GM12878 (cell line): ENCODE measurements at regions of chr13 and their contacts with region 1.

Region 1: GRCh38 chr13:51764184-51765141 is 39.5 kb downstream of the DHRS12 start:
- DNase-seq: peak; percentile 65
- ATAC-seq: peak; percentile 90
- H3K4me3 ChIP-seq: peak overlapping the region; percentile 49
- H3K27ac ChIP-seq: peak overlapping the region; percentile 87
- H3K4me1 ChIP-seq: peaks cover 21% of the 10 kb centered on the region
- H3K27me3 ChIP-seq: no peaks in the 10 kb centered on the region
- CTCF ChIP-seq: 0 out of 6 replicates have a peak, but pooled peaks of 1 of the 3 experiments have one; percentile 7
- EP300 ChIP-seq: no peak
- POLR2A ChIP-seq: peak; percentile 81
- RAD21 ChIP-seq: no peak

Region 2: GRCh38 chr13:51590971-51591627 is 173.4 kb before region 1 on chr13:
- CTCF ChIA-PET with region 1: interaction called, 9 read pairs
- POLR2A ChIA-PET with region 1: interaction called, 4 read pairs
- RAD21 ChIA-PET with region 1: interaction called, 29 read pairs
- SMC1A ChIA-PET with region 1: interaction called, 11 read pairs
- in situ Hi-C with region 1: no loop called
- intact Hi-C with region 1: no loop called
- DNase-seq: no peak
- ATAC-seq: peak; percentile 27
- H3K4me3 ChIP-seq: no peak overlapping the region; the same call in 1 of the 2 replicates
- H3K27ac ChIP-seq: peak overlapping the region; percentile 18; the same call in 1 of the 2 replicates
- H3K4me1 ChIP-seq: peaks cover 3% of the 10 kb centered on the region; the same call in 1 of the 2 replicates
- H3K27me3 ChIP-seq: no peaks in the 10 kb centered on the region
- CTCF ChIP-seq: no peak
- EP300 ChIP-seq: no peak
- POLR2A ChIP-seq: no peak
- RAD21 ChIP-seq: 0 out of 2 replicates have a peak, but pooled peaks have one; percentile 13

Region 3: DNA sequence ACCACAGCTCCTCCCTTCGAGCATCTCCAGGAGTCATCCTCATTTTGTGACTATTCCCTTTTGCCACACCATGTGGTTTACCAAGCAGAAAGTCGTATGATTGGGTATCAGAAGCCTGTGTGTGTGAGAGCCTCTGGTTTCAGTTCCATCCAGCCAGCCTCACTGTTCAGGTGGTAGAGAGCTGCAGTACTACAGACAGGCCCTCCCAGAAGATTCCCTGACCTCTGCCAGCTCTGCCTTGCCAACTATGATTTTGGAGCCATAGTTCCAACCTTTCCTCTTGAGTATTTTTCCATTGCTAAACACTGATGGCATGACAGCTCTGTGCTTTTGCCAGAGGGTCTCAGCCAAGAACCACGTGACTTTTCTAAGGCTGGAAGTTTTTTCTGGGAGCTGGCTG is 43.0 kb before region 1 on chr13:
- CTCF ChIA-PET with region 1: interaction called, 3 read pairs
- POLR2A ChIA-PET with region 1: interaction called, 7 read pairs
- RAD21 ChIA-PET with region 1: interaction called, 4 read pairs
- SMC1A ChIA-PET with region 1: interaction called, 10 read pairs
- in situ Hi-C with region 1: no loop called
- intact Hi-C with region 1: no loop called
- DNase-seq: peak; percentile 53
- ATAC-seq: peak; percentile 95
- H3K4me3 ChIP-seq: no peak overlapping the region
- H3K27ac ChIP-seq: peak overlapping the region; percentile 72
- H3K4me1 ChIP-seq: peaks cover 15% of the 10 kb centered on the region
- H3K27me3 ChIP-seq: no peaks in the 10 kb centered on the region
- CTCF ChIP-seq: no peak
- EP300 ChIP-seq: no peak
- POLR2A ChIP-seq: no peak
- RAD21 ChIP-seq: no peak

Region 4: GRCh38 chr13:51781246-51782022 is 17.0 kb after region 1 on chr13:
- CTCF ChIA-PET with region 1: interaction called, 12 read pairs
- POLR2A ChIA-PET with region 1: interaction called, 3 read pairs
- RAD21 ChIA-PET with region 1: interaction called, 6 read pairs
- SMC1A ChIA-PET with region 1: interaction called, 6 read pairs
- in situ Hi-C with region 1: no loop called
- intact Hi-C with region 1: no loop called
- DNase-seq: no peak
- ATAC-seq: peak; percentile 86
- H3K4me3 ChIP-seq: no peak overlapping the region
- H3K27ac ChIP-seq: no peak overlapping the region
- H3K4me1 ChIP-seq: peaks cover 5% of the 10 kb centered on the region; the same call in 1 of the 2 replicates
- H3K27me3 ChIP-seq: no peaks in the 10 kb centered on the region
- CTCF ChIP-seq: peak; percentile 38 to 61 (median 57); a peak in 4 of 6 replicates
- EP300 ChIP-seq: no peak
- POLR2A ChIP-seq: no peak
- RAD21 ChIP-seq: peak; percentile 66

Region 5: DNA sequence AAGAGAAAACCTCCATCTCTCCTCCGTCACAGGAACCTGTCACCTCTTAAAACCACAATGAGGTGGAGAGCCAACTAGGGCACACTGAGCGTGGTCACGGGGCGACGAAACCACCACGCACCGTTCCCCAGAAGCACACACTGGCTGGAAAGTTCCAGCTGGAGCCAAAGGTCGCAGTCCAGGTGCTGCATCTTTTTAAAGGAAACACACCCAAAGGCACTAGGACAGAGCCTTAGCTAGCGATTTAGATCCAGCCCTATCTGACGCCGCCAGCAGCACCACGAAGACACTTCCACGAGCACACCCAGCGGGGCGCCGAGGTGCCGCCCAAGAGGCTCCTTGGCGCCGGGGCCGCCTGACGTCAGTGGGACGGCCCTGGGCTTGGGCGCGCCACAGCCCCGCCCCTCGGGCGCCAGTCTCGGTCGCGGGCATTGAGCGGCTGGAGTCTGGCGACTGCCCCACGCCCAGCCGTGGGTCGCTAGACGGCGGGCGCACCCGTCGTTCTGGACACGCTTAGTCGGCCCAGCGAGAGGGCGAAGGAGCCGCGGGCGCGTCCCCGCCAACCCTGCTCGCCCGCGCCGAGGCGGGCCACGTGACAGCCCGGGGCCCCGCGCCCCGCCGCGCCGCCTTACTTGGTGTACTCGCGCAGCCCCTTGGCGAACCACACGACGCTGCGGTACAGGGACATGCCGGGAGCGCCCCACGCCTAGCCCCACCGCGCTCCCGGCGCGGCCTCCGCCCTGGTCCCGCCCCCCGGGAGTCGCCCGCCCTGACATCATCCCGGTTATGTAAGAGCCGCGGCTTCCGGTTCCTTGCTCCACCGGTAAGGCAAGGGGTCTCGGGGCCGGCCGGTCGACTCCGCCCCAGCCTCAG is 39.2 kb after region 1 on chr13 and contains the start of gene DHRS12:
- CTCF ChIA-PET with region 1: interaction called, 13 read pairs
- POLR2A ChIA-PET with region 1: interaction called, 4 read pairs
- RAD21 ChIA-PET with region 1: interaction called, 7 read pairs
- SMC1A ChIA-PET with region 1: interaction called, 24 read pairs
- in situ Hi-C with region 1: no loop called
- intact Hi-C with region 1: no loop called
- DNase-seq: peak; percentile 58
- ATAC-seq: peak; percentile 86
- H3K4me3 ChIP-seq: peak within 1 kb of the TSS; percentile 82
- H3K27ac ChIP-seq: peak within 1 kb of the TSS; percentile 91
- H3K4me1 ChIP-seq: peaks cover 17% of the 10 kb centered on the region
- H3K27me3 ChIP-seq: no peaks in the 10 kb centered on the region
- CTCF ChIP-seq: no peak; a peak in 1 of 6 replicates
- EP300 ChIP-seq: peak in 1 of 2 experiments; percentile 30; a peak in 1 of 4 replicates
- POLR2A ChIP-seq: peak; percentile 95
- RAD21 ChIP-seq: 0 out of 2 replicates have a peak, but pooled peaks have one; percentile 14
- polyA plus RNA-seq, gene DHRS12: 2.9 to 4.0 TPM

Region 6: GRCh38 chr13:51844862-51845573 is 80.6 kb after region 1 on chr13 and contains the start of gene TMEM272:
- CTCF ChIA-PET with region 1: no interaction called
- POLR2A ChIA-PET with region 1: no interaction called
- RAD21 ChIA-PET with region 1: no interaction called
- SMC1A ChIA-PET with region 1: no interaction called
- in situ Hi-C with region 1: no loop called
- intact Hi-C with region 1: no loop called
- DNase-seq: no peak
- ATAC-seq: peak; percentile 81
- H3K4me3 ChIP-seq: no peak within 1 kb of the TSS
- H3K27ac ChIP-seq: no peak within 1 kb of the TSS
- H3K4me1 ChIP-seq: no peaks in the 10 kb centered on the region
- H3K27me3 ChIP-seq: peaks cover 0 to 3% of the 10 kb centered on the region in 2 experiments; a peak in 2 of 4 replicates
- CTCF ChIP-seq: peak; percentile 63 to 93 (median 90)
- EP300 ChIP-seq: no peak
- POLR2A ChIP-seq: no peak
- RAD21 ChIP-seq: peak; percentile 47
- polyA plus RNA-seq, gene TMEM272: not detected